Keratinocyte (primary cell): ENCODE measurements at regions of chr7 and their contacts with region 1.

Region 1: GRCh38 chr7:20310963-20311742 is 19.5 kb upstream of the ITGB8 start:
- DNase-seq: no peak
- H3K4me3 ChIP-seq: no peak overlapping the region
- H3K27ac ChIP-seq: no peak overlapping the region
- H3K4me1 ChIP-seq: no peaks in the 10 kb centered on the region
- H3K27me3 ChIP-seq: no peaks in the 10 kb centered on the region
- CTCF ChIP-seq: peak in 2 of 3 experiments; percentile 11 to 23

Region 2: GRCh38 chr7:19754521-19755116 is 556.5 kb before region 1 on chr7:
- dilution Hi-C with region 1: loop called (anchors 25 kb)
- DNase-seq: no peak
- H3K4me3 ChIP-seq: no peak overlapping the region
- H3K27ac ChIP-seq: no peak overlapping the region
- H3K4me1 ChIP-seq: peaks cover 5% of the 10 kb centered on the region
- H3K27me3 ChIP-seq: no peaks in the 10 kb centered on the region
- CTCF ChIP-seq: peak in 2 of 3 experiments; percentile 48 to 49

Region 3: DNA sequence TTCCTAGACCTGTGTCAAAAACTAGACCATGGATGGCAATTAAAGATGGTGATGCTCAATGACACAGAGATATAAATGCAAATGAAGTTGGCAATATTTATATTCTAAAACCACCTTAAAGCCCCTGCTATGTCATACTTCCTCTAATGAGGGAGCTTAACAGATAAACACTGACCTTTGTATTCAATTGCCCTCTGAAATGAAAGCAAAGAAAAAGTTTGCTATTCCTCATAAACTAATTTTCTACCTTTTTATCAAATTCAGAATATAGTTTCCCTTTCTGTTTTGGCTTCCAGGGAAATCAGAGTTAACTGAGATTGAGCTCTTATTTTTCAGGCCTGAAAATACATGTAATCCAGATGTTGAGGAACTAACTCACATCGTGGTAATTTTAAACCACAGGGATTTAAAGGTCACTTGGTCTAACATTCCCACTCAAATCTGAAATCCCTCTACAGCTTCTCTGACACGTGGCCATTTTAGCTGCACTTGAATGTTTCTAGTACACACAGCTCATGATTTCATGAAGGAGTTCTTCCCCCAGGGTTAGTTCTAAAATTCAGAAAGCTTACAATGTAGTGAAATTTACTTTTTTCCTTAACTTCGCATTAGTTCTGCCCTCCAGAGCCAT is 266.4 kb after region 1 on chr7:
- dilution Hi-C with region 1: no loop called
- DNase-seq: no peak
- H3K4me3 ChIP-seq: no peak overlapping the region
- H3K27ac ChIP-seq: no peak overlapping the region
- H3K4me1 ChIP-seq: no peaks in the 10 kb centered on the region
- H3K27me3 ChIP-seq: no peaks in the 10 kb centered on the region
- CTCF ChIP-seq: no peak